ENCODE measurements at regions of chr1 and their contacts with region 1.

Region 1: GRCh38 chr1:153566440-153567379 is 1.1 kb upstream of the S100A2 start:
- DNase-seq: peak; percentile 89 to 96 (median 91)
- H3K4me3 ChIP-seq: no peak overlapping the region
- H3K27ac ChIP-seq: peak overlapping the region; percentile 83 to 90
- H3K4me1 ChIP-seq: peaks cover 16% of the 10 kb centered on the region
- H3K27me3 ChIP-seq: no peaks in the 10 kb centered on the region
- CTCF ChIP-seq: no peak
- EP300 ChIP-seq: no peak
- POLR2A ChIP-seq: no peak

Region 2: GRCh38 chr1:153532769-153533599 is 33.7 kb before region 1 on chr1:
- intact Hi-C with region 1: loop called in 3 of 4 experiments (anchors 1 to 2 kb)
- DNase-seq: peak; percentile 87 to 92 (median 90)
- H3K4me3 ChIP-seq: peak overlapping the region; percentile 56
- H3K27ac ChIP-seq: peak overlapping the region; percentile 31 to 97
- H3K4me1 ChIP-seq: peaks cover 18% of the 10 kb centered on the region
- H3K27me3 ChIP-seq: no peaks in the 10 kb centered on the region
- CTCF ChIP-seq: peak; percentile 79 to 91 (median 87)
- EP300 ChIP-seq: no peak
- POLR2A ChIP-seq: peak; percentile 14

Measured in ovary (tissue), 10 donors.